ENCODE measurements at regions of chr15 and their contacts with region 1.

Region 1: GRCh38 chr15:92917606-92918407 is 17.7 kb downstream of the CHD2 start:
- DNase-seq: peak; percentile 86 to 97
- ATAC-seq: peak; percentile 55 to 59
- H3K4me3 ChIP-seq: peak overlapping the region; percentile 28
- H3K27ac ChIP-seq: peak overlapping the region; percentile 79 to 88
- H3K4me1 ChIP-seq: peaks cover 95% of the 10 kb centered on the region
- CTCF ChIP-seq: peak; percentile 98
- EP300 ChIP-seq: no peak
- POLR2A ChIP-seq: no peak
- RAD21 ChIP-seq: peak; percentile 94 to 98

Region 2: DNA sequence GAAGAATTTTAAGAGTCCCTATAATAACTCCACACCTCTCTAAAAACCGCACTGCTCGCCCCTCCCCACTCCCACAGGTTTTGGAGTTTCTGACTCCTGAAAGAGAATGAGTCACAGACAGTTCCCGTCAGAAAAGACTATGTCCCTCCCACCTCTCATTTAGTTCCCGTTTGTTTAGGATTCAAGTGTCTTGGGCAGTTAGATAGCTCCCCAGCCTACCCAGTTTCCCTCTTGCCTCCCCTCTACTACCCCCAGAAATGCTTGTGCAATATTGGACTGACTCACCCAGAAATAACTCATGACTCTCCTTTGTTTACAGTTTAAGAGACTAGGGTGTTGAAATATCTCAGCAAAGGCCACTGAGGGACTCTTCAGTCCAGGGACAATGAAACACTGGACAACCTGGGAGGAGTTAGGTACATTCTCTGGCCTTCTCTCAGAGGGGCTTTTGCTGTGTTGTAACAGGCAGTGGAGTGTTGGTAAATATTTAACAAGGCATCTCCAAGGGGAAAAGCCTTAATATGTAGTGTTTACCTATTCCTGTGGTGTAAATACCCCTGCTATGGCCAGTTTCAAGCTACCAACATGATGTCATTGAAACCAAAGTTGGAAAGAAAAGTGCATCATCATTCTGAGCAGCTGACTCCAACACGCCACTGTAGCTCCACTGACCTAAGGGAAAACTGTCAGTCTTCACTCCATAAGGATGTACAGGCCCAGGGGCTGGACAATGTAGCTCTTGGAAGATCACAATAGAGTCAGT is 113.8 kb before region 1 on chr15:
- CTCF ChIA-PET with region 1: interaction called, 167 read pairs
- POLR2A ChIA-PET with region 1: interaction called, 80 read pairs
- DNase-seq: peak; percentile 96 to 100
- ATAC-seq: peak; percentile 85 to 87
- H3K4me3 ChIP-seq: no peak overlapping the region
- H3K27ac ChIP-seq: peak overlapping the region; percentile 95 to 97
- H3K4me1 ChIP-seq: peaks cover 48% of the 10 kb centered on the region
- CTCF ChIP-seq: no peak
- EP300 ChIP-seq: peak; percentile 98
- POLR2A ChIP-seq: no peak
- RAD21 ChIP-seq: peak; percentile 45 to 60; a peak in 3 of 5 replicates

Region 3: DNA sequence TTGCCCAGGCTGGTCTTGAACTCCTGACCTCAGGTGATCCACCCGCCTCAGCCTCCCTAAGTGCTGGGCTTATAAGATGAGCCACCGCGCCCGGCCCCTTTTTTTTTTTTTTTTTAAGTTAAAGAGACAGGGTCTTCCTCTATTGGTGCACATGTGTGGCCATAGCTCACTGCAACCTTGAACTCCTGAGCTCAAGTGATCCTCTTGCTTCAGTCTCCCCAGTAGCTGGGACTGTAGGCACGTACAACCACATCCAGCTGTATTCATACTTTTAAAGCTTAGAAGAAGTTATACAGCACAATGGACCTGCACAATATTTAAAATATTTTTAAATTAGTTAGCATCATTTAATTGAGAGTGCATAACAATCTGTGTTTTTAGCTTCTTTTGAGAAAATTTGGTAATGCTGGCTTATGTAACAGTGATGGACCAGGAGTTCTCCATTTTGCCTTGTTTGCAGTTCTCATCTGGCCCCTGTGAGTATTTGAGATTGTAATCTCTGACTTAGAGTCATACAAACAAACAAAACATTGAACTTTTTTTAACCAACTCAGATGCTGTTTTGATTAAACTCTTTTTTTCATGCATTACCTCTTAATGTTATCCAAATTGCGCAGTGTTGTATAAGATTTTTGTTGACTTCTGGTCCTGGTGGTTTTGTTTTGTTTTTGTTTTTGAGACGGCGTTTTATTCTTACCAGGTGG is 15.3 kb after region 1 on chr15:
- CTCF ChIA-PET with region 1: interaction called, 18 read pairs
- POLR2A ChIA-PET with region 1: no interaction called
- DNase-seq: no peak
- ATAC-seq: no peak; a peak in 1 of 6 replicates
- H3K4me3 ChIP-seq: no peak overlapping the region
- H3K27ac ChIP-seq: no peak overlapping the region
- H3K4me1 ChIP-seq: peaks cover 14% of the 10 kb centered on the region; the same call in 2 of the 3 replicates
- CTCF ChIP-seq: no peak
- EP300 ChIP-seq: no peak
- POLR2A ChIP-seq: no peak
- RAD21 ChIP-seq: no peak

Region 4: DNA sequence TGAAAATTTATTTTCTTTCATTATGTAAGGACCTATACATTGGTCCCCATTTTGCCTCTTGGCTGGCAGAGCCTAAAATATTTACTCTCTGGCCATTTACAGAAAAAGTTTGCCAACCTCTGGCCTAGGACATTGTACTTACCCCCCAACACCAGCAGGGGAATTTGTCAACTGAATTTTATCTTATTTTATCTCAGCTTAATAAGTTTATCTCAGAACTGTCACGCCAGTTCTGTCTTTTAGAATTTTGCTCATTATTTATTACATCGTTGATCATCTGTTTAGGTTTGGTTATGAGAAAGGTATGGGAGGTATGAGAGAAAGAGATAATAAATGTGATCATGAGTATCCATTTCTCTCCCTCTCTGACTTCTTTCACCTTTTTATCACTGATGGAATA is 20.6 kb after region 1 on chr15:
- CTCF ChIA-PET with region 1: interaction called, 18 read pairs
- POLR2A ChIA-PET with region 1: no interaction called
- DNase-seq: no peak
- ATAC-seq: peak in 1 of 2 experiments; percentile 54; a peak in 3 of 6 replicates
- H3K4me3 ChIP-seq: no peak overlapping the region
- H3K27ac ChIP-seq: no peak overlapping the region
- H3K4me1 ChIP-seq: no peaks in the 10 kb centered on the region
- CTCF ChIP-seq: no peak
- EP300 ChIP-seq: no peak
- POLR2A ChIP-seq: no peak
- RAD21 ChIP-seq: no peak